Activated naive CD4-positive, alpha-beta T cell treated with anti-CD3 and anti-CD28 coated beads, Interleukin-2, amount 10 ng/mL, durations not matched to agents 7 days and 5 days (primary cell): ENCODE measurements at regions of chr17 and their contacts with region 1.

Region 1: GRCh38 chr17:1365445-1366039 is 34.5 kb downstream of the YWHAE start:
- DNase-seq: peak; percentile 70
- H3K4me3 Mint-ChIP-seq: no peak overlapping the region
- H3K27ac Mint-ChIP-seq: peak overlapping the region; percentile 37
- H3K4me1 Mint-ChIP-seq: peaks cover 58% of the 10 kb centered on the region
- H3K27me3 Mint-ChIP-seq: no peaks in the 10 kb centered on the region

Region 2: GRCh38 chr17:1379930-1380313 is 14.4 kb after region 1 on chr17:
- CTCF ChIA-PET with region 1: interaction called, 34 read pairs
- DNase-seq: no peak
- H3K4me3 Mint-ChIP-seq: no peak overlapping the region
- H3K27ac Mint-ChIP-seq: peak overlapping the region; percentile 78
- H3K4me1 Mint-ChIP-seq: peaks cover 66% of the 10 kb centered on the region
- H3K27me3 Mint-ChIP-seq: no peaks in the 10 kb centered on the region

Region 3: GRCh38 chr17:1390433-1391367 is 25.2 kb after region 1 on chr17:
- CTCF ChIA-PET with region 1: interaction called, 14 read pairs
- DNase-seq: no peak
- H3K4me3 Mint-ChIP-seq: no peak overlapping the region
- H3K27ac Mint-ChIP-seq: no peak overlapping the region
- H3K4me1 Mint-ChIP-seq: peaks cover 49% of the 10 kb centered on the region
- H3K27me3 Mint-ChIP-seq: no peaks in the 10 kb centered on the region

Region 4: DNA sequence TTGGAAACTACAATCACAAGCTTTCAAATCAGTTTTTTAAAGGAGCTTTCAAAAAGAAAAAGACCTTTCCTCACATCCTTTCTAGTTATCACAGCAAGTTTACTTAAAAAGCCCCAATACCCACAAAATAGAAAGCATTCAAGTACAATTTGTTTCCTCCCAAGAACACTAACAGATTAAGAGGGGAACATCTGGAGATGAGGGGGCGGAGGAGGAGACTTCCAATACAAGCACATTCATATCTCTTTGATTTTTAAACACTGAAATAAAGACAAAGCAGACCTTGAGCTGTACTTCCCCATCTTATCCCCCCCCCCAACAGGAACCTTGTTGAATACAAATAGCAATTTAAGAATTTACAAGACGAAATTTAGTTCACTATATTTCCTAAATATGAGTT is 32.5 kb after region 1 on chr17:
- CTCF ChIA-PET with region 1: interaction called, 14 read pairs
- DNase-seq: no peak
- H3K4me3 Mint-ChIP-seq: peak overlapping the region; percentile 97
- H3K27ac Mint-ChIP-seq: peak overlapping the region; percentile 30
- H3K4me1 Mint-ChIP-seq: peaks cover 41% of the 10 kb centered on the region
- H3K27me3 Mint-ChIP-seq: peaks cover 14% of the 10 kb centered on the region

Region 5: GRCh38 chr17:1516388-1517161 is 151.0 kb after region 1 on chr17 and contains the start of gene INPP5K:
- CTCF ChIA-PET with region 1: interaction called, 53 read pairs
- DNase-seq: peak; percentile 99
- H3K4me3 Mint-ChIP-seq: peak within 1 kb of the TSS; percentile 96
- H3K27ac Mint-ChIP-seq: peak within 1 kb of the TSS; percentile 98
- H3K4me1 Mint-ChIP-seq: peaks cover 35% of the 10 kb centered on the region
- H3K27me3 Mint-ChIP-seq: no peaks in the 10 kb centered on the region

Region 6: DNA sequence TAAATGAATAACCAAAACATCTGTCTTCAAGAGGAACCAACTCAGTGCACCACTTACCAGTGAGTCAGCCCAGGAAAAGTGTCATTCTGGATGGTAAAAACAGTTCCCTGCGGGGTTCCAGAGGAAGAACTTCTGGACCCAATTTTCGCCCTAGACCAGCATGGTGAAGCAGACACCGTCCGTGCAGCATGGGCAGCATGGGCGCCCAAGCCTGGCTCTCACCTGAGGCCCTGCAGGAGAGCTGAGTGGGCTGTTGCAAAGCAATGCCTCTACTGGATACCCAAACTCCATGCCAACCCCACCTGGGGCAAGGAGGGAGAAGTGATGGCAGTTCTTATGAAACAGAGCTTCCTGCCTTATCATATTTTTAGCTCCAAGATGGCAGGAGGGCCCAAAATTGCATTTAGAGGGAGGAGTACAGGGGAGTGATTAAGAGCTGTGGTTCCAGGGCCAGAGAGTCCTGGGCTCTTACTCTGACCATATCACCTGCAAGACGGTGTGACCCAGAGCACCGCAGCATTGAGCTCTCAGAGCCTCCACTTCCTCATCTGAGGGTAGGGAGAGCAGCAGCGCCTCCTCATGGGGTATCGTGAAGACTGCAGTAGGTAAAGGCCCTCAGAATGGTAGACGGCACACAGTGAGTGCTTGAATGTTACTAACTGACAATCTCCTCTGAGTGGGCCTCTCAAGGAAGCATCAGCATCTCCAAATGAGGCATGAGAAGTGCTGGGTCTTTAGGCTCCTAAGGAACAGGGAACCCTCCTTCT is 167.5 kb after region 1 on chr17:
- CTCF ChIA-PET with region 1: interaction called, 28 read pairs
- DNase-seq: peak; percentile 59
- H3K4me3 Mint-ChIP-seq: no peak overlapping the region
- H3K27ac Mint-ChIP-seq: no peak overlapping the region
- H3K4me1 Mint-ChIP-seq: peaks cover 6% of the 10 kb centered on the region
- H3K27me3 Mint-ChIP-seq: no peaks in the 10 kb centered on the region